GM18951 (cell line): ENCODE measurements at regions of chr14 and their contacts with region 1.

Region 1: DNA sequence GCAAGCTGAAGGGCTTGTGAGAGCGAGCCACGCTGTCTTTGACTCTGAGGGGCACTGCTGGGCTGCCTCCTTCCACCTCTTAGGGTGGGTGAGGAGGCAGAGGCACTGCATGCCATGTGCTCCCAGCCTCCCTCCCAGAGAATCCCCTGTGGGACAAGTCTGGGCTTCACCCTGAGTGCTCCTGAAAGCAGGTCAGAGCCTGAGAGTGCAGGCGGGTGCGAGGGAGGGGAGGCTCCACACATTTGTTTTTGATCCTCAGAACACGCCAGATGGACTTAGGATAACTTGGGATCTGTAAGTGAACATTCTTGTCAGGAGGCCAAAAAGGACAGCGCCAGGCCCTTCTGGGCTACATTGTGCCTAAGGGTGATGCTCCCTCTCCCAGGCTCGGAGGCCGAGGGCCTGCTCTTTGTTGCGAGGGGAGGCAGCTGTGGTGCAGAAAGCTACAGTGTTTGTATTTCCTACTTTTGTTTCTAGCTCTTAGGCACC is 155.4 kb downstream of the TMX1 start:
- POLR2A ChIP-seq: no peak

Region 2: DNA sequence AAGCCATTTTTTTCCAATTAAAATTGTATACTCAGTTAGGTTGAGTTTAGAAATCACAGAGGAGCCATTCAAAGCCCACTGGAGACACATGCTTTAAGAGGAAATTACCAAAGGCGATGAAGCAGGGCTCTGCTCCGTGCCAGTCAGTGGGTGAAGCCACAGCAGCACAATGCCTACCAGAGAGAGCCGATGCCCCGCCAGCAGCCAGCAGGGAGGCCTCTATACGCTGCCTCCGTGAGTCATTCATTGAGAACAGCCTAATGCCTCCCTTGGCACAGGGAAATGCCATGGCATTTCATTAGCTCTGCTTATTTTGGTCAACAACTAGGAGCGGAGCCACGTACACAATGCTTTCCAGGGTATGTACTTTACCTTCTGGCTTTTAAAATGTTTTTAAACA is 58.5 kb after region 1 on chr14:
- in situ Hi-C with region 1: no loop called
- POLR2A ChIP-seq: no peak

Region 3: DNA sequence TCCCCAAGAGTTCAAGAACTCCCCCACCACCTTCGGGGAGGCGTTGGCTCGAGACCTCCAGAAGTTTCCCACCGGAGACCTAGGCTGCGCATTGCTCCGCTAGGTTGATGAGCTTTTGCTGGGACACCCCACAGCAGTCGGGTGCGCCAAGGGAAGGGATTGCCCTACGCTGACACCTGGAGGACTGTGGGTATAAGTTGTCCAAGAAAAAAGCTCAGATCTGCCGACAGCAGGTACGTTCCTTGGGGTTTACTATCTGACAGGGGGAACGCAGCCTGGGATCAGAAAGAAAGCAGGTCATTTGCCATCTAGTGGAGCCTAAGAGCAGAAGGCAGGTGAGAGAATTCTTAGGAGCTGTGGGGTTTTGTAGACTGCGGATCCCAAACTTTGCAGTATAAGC is 355.1 kb after region 1 on chr14:
- in situ Hi-C with region 1: loop called (anchors 10 kb)
- POLR2A ChIP-seq: no peak

Region 4: GRCh38 chr14:51860164-51860824 is 464.9 kb after region 1 on chr14 and contains the start of gene GNG2:
- in situ Hi-C with region 1: no loop called
- POLR2A ChIP-seq: peak; percentile 97